ENCODE measurements at regions of chr12 and their contacts with region 1.

Region 1: GRCh38 chr12:64796208-64796845 is 28.1 kb upstream of the TBC1D30 start:
- DNase-seq: peak; percentile 92
- ATAC-seq: peak; percentile 96
- H3K4me3 ChIP-seq: no peak overlapping the region
- H3K27ac ChIP-seq: no peak overlapping the region
- H3K4me1 ChIP-seq: no peaks in the 10 kb centered on the region
- H3K27me3 ChIP-seq: peaks cover 32% of the 10 kb centered on the region
- CTCF ChIP-seq: peak; percentile 88
- POLR2A ChIP-seq: no peak
- RAD21 ChIP-seq: peak; percentile 52

Region 2: GRCh38 chr12:64780531-64781279 is 15.6 kb before region 1 on chr12:
- CTCF ChIA-PET with region 1: interaction called, 14 read pairs
- POLR2A ChIA-PET with region 1: no interaction called
- dilution Hi-C with region 1: no loop called
- in situ Hi-C with region 1: no loop called
- intact Hi-C with region 1: no loop called
- DNase-seq: no peak
- ATAC-seq: peak; percentile 82
- H3K4me3 ChIP-seq: peak overlapping the region; percentile 37; the same call in 1 of the 2 replicates
- H3K27ac ChIP-seq: no peak overlapping the region
- H3K4me1 ChIP-seq: peaks cover 2% of the 10 kb centered on the region; the same call in 1 of the 2 replicates
- H3K27me3 ChIP-seq: peaks cover 51% of the 10 kb centered on the region
- CTCF ChIP-seq: no peak
- POLR2A ChIP-seq: no peak
- RAD21 ChIP-seq: no peak

Region 3: GRCh38 chr12:64785838-64786237 is 10.5 kb before region 1 on chr12:
- CTCF ChIA-PET with region 1: interaction called, 14 read pairs
- POLR2A ChIA-PET with region 1: no interaction called
- dilution Hi-C with region 1: no loop called
- in situ Hi-C with region 1: no loop called
- intact Hi-C with region 1: no loop called
- DNase-seq: no peak
- ATAC-seq: no peak
- H3K4me3 ChIP-seq: no peak overlapping the region
- H3K27ac ChIP-seq: no peak overlapping the region
- H3K4me1 ChIP-seq: peaks cover 2% of the 10 kb centered on the region; the same call in 1 of the 2 replicates
- H3K27me3 ChIP-seq: peaks cover 32% of the 10 kb centered on the region
- CTCF ChIP-seq: no peak
- POLR2A ChIP-seq: no peak
- RAD21 ChIP-seq: no peak

Measured in IMR-90 (cell line).